ENCODE measurements at regions of chr9 and their contacts with region 1.

Region 1: DNA sequence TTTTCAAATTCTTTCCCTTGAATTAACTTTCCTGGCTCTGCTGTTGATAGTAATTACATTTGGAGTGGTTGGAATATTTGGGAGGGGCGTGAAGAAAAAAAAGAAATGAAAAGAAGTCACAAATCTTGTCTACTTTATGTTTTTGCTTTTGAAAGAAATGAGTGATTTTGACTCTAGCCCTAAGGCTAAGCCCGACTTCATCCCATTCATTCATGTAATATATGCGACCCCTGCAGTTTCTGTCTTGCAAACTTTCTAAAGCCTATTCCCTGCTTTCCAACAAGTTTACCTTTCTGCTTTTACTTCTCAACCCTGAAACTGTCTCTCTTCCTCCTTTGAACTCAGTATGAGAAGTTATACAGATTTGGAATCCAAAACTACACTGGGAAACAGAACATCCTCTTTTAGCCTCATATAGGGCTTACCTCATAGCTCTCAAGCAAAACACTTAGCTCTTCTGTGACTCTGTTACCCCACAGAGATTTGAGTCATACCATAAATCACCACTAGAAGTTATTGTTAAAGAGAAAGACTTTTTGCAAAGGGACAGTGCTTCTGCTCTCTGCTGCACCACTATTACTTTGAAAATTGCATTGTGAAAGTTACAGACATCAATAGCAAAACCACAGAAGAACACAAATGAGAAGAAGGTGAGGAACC is 1.6 kb downstream of the CFAP95 start:
- DNase-seq: no peak
- H3K4me3 ChIP-seq: no peak overlapping the region
- H3K4me3 Mint-ChIP-seq: no peak overlapping the region
- H3K27ac ChIP-seq: no peak overlapping the region
- H3K27ac Mint-ChIP-seq: no peak overlapping the region
- H3K4me1 ChIP-seq: peaks cover 7% of the 10 kb centered on the region
- H3K4me1 Mint-ChIP-seq: peaks cover 5 to 11% (median 6%) of the 10 kb centered on the region in 4 donors
- H3K27me3 ChIP-seq: no peaks in the 10 kb centered on the region
- H3K27me3 Mint-ChIP-seq: peaks cover 21 to 27% of the 10 kb centered on the region in 2 donors

Region 2: DNA sequence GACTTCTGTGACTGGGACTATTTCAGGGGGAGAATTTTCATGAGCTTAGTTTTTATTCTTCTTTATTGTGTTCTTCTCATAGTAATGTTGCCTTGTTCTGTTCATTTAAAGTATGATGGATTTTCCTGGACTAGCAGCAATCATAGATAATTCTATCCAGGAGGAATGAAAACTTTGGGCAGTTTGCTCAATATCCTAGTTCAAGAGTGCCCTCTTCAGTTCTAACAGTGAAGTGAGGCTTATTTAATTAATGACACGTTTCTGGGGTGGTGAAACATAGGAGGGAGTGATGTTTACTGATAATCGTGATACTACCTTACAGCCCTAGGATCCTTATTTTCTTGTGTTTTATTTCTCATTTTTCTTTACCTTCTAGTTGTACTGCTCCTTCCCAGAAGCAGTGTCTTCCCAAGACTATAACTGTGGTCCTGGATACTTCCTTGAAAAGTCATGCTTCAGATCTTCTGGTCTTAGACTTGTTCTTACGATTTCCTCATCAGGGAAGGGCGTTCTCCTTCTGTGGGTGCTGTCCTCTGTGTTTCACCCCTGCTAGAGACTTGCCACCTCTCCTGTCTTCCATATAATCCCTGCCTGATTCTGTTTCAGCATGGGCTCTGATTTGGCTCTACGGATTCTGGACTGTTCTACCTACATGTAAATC is 55.8 kb after region 1 on chr9:
- CTCF ChIA-PET with region 1: no interaction called
- POLR2A ChIA-PET with region 1: no interaction called
- intact Hi-C with region 1: loop called (anchors 10 kb)
- DNase-seq: peak in 3 of 5 donors; percentile 0 to 16 (median 4)
- H3K4me3 ChIP-seq: no peak overlapping the region
- H3K4me3 Mint-ChIP-seq: no peak overlapping the region
- H3K27ac ChIP-seq: no peak overlapping the region
- H3K27ac Mint-ChIP-seq: peak overlapping the region in 1 of 7 donors; percentile 1
- H3K4me1 ChIP-seq: no peaks in the 10 kb centered on the region
- H3K4me1 Mint-ChIP-seq: no peaks in the 10 kb centered on the region
- H3K27me3 ChIP-seq: no peaks in the 10 kb centered on the region
- H3K27me3 Mint-ChIP-seq: peaks cover 2% of the 10 kb centered on the region in 2 donors

Region 3: DNA sequence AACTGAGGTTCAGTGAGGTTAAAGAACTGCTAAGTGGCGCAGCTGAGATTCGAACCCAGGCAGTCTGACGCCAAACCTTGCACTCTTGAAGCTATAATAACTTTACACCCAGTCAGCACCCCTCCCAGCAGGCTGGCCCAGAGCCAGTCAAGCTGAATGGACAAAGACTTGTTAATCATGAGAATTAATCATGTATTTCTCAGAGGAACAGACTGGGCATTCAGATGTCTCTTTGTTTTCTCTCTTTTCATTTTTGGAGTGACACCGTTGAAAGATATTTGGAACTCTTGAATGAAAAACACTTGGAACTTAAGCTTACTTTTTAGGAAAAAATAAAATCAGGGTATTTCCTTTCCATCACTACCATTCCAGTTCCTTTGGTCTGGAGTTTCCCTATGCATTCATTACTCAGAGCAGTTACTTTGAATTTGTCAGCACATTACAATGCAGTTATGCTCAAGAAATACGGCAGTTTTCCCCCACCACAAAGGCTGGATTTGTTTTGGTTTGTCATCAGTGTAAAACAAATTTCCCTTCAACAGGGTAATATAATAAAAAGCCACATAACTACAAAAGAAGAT is 198.9 kb after region 1 on chr9:
- CTCF ChIA-PET with region 1: no interaction called
- POLR2A ChIA-PET with region 1: no interaction called
- intact Hi-C with region 1: no loop called
- DNase-seq: no peak
- H3K4me3 ChIP-seq: no peak overlapping the region
- H3K4me3 Mint-ChIP-seq: no peak overlapping the region
- H3K27ac ChIP-seq: no peak overlapping the region
- H3K27ac Mint-ChIP-seq: no peak overlapping the region
- H3K4me1 ChIP-seq: no peaks in the 10 kb centered on the region
- H3K4me1 Mint-ChIP-seq: no peaks in the 10 kb centered on the region
- H3K27me3 ChIP-seq: no peaks in the 10 kb centered on the region
- H3K27me3 Mint-ChIP-seq: peaks cover 6% of the 10 kb centered on the region in 2 donors